Natural killer cell (primary cell): ENCODE measurements at regions of chr11 and their contacts with region 1.

Region 1: DNA sequence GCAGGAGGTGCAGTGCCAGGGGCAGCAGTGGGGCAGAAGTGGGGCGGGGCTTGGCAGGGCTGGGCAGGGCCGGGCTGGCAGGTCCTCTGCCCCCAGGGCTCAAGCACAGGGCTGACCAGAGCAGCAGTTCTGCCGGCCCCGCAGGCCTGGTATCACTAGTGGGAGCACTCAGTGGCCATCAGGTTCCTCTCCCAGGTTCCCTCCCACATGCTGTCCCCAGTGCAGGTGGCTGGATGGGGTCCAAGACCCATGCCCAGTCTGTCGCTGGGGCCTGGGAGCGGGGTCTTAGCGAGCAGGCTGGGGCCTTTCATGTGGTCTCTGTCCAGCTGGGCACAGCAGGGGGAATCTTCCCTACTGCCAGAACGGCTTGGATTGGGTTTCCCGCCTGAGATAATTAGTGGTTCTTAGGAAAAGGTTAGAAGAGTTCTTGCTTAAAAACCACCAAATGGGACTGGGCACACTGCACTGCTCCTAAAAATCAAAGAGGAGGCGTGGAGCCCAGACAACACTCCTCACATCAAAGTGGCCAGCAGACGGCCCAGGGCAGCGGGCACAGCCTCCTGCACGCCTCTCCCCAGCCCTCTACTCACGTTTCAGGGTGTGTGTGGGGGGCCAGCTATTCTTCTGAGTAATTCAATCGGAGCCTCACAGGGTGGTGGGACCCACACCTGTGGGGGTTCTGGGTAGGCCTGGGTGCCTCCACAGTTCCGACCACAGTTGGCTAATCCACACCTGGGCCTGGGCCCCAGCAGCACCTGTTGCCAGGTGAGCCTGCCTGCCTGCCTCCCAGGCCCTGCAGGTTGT is 45.6 kb downstream of the TPCN2 start:
- DNase-seq: no peak
- ATAC-seq: no peak
- H3K4me3 ChIP-seq: no peak overlapping the region
- H3K4me3 Mint-ChIP-seq: no peak overlapping the region
- H3K27ac ChIP-seq: no peak overlapping the region
- H3K27ac Mint-ChIP-seq: no peak overlapping the region
- H3K4me1 ChIP-seq: no peaks in the 10 kb centered on the region
- H3K4me1 Mint-ChIP-seq: peaks cover 0 to 5% of the 10 kb centered on the region in 2 donors
- H3K27me3 ChIP-seq: no peaks in the 10 kb centered on the region
- H3K27me3 Mint-ChIP-seq: no peaks in the 10 kb centered on the region
- CTCF ChIP-seq: no peak

Region 2: DNA sequence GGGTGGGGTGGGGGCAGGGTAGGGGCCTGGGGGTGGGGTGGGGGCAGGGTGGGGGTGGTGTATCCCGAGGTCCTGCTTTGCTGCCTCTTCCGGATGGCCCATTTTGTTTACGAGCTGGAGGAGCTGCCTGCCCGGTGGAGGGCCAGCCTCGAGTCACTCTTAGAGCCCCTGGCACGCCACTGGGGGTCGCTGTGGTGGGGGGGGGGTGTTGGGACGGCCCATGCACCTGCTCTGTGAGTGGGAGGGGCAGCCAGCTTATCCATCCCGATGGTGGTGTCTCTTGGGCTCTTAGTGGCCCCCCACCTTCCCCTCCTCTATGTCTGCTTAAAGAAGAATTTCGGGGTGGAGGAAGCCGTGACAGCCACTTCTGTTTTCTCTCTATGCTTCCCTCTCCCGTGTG is 138.2 kb before region 1 on chr11:
- intact Hi-C with region 1: loop called (anchors 5 kb)
- DNase-seq: peak in 1 of 2 donors; percentile 53
- ATAC-seq: peak in 2 of 3 donors; percentile 54 to 62
- H3K4me3 ChIP-seq: no peak overlapping the region
- H3K4me3 Mint-ChIP-seq: no peak overlapping the region
- H3K27ac ChIP-seq: no peak overlapping the region
- H3K27ac Mint-ChIP-seq: no peak overlapping the region
- H3K4me1 ChIP-seq: peaks cover 12% of the 10 kb centered on the region
- H3K4me1 Mint-ChIP-seq: peaks cover 0 to 7% of the 10 kb centered on the region in 2 donors
- H3K27me3 ChIP-seq: no peaks in the 10 kb centered on the region
- H3K27me3 Mint-ChIP-seq: peaks cover 0 to 8% of the 10 kb centered on the region in 2 donors
- CTCF ChIP-seq: no peak

Region 3: GRCh38 chr11:69115586-69116560 is 21.6 kb after region 1 on chr11:
- intact Hi-C with region 1: no loop called
- DNase-seq: no peak
- ATAC-seq: no peak
- H3K4me3 ChIP-seq: no peak overlapping the region
- H3K4me3 Mint-ChIP-seq: no peak overlapping the region
- H3K27ac ChIP-seq: no peak overlapping the region
- H3K27ac Mint-ChIP-seq: no peak overlapping the region
- H3K4me1 ChIP-seq: no peaks in the 10 kb centered on the region
- H3K4me1 Mint-ChIP-seq: no peaks in the 10 kb centered on the region
- H3K27me3 ChIP-seq: no peaks in the 10 kb centered on the region
- H3K27me3 Mint-ChIP-seq: no peaks in the 10 kb centered on the region
- CTCF ChIP-seq: no peak